Activated CD4-positive, alpha-beta memory T cell treated with anti-CD3 and anti-CD28 coated beads for 36 hours (primary cell): ENCODE measurements at regions of chr7 and their contacts with region 1.

Region 1: DNA sequence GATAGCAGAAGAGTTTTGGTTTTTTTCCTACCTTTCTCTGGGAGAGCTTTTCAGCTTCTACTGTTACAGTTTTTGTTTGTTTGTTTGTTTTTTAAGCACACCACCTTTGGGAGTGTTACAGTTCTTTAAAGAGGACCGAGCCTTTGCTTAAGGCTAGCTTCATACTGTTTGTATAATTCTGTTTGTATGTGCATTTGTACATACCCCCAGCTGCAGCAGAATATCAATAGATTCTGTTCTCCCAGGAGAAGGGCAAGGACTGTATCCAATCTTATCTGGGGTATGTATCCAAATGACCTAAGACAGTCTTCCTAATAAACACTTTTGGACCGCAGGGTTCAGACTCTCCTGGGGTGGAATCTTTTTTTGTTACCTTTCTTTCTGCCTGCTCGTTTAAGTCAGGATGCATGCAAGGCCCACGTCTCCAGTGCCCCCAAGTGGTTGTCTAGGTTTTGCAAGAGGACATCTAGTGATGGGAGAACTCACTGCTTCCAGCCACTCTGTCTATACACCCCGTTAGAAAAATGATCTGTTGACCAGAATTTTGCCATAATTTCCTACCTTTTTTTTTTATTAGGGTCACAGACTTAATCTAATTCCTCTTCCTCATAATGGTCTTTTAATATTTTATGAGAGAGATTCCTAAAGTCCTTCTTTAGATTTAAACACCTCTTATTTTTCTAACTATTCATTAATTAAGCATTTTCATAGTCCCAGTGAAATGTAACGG is 23.9 kb downstream of the NRF1 start:
- DNase-seq: peak; percentile 81
- H3K4me3 Mint-ChIP-seq: no peak overlapping the region
- H3K27ac Mint-ChIP-seq: peak overlapping the region; percentile 16
- H3K4me1 Mint-ChIP-seq: peaks cover 36% of the 10 kb centered on the region
- H3K27me3 Mint-ChIP-seq: no peaks in the 10 kb centered on the region

Region 2: GRCh38 chr7:129072479-129073011 is 562.9 kb before region 1 on chr7:
- CTCF ChIA-PET with region 1: no interaction called
- POLR2A ChIA-PET with region 1: no interaction called
- intact Hi-C with region 1: no loop called
- DNase-seq: peak; percentile 24
- H3K4me3 Mint-ChIP-seq: no peak overlapping the region
- H3K27ac Mint-ChIP-seq: no peak overlapping the region
- H3K4me1 Mint-ChIP-seq: peaks cover 6% of the 10 kb centered on the region
- H3K27me3 Mint-ChIP-seq: peaks cover 10% of the 10 kb centered on the region

Region 3: DNA sequence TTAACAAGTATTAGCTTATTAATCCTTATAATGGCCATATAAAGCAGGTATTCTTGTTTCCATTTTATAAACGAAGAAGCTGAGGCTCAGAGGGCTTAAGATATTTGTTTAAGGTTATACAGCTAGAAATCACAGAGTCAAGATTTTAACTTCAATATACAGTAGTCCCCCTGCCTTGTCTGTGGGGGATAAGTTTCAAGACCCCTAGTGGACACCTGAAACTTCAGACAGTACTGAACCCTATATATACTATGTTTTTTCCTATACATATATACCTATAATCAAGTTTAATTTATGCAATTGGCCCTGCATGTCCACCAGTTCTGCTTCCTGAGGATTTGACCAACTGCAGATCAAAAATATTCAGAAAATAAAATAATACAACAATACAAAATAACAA is 245.6 kb before region 1 on chr7:
- CTCF ChIA-PET with region 1: no interaction called
- POLR2A ChIA-PET with region 1: no interaction called
- intact Hi-C with region 1: no loop called
- DNase-seq: no peak
- H3K4me3 Mint-ChIP-seq: no peak overlapping the region
- H3K27ac Mint-ChIP-seq: no peak overlapping the region
- H3K4me1 Mint-ChIP-seq: peaks cover 8% of the 10 kb centered on the region
- H3K27me3 Mint-ChIP-seq: no peaks in the 10 kb centered on the region

Region 4: GRCh38 chr7:129401967-129402860 is 233.3 kb before region 1 on chr7:
- CTCF ChIA-PET with region 1: interaction called, 4 read pairs
- POLR2A ChIA-PET with region 1: no interaction called
- intact Hi-C with region 1: loop called (anchors 10 kb)
- DNase-seq: peak; percentile 56
- H3K4me3 Mint-ChIP-seq: no peak overlapping the region
- H3K27ac Mint-ChIP-seq: peak overlapping the region; percentile 29
- H3K4me1 Mint-ChIP-seq: peaks cover 37% of the 10 kb centered on the region
- H3K27me3 Mint-ChIP-seq: no peaks in the 10 kb centered on the region

Region 5: DNA sequence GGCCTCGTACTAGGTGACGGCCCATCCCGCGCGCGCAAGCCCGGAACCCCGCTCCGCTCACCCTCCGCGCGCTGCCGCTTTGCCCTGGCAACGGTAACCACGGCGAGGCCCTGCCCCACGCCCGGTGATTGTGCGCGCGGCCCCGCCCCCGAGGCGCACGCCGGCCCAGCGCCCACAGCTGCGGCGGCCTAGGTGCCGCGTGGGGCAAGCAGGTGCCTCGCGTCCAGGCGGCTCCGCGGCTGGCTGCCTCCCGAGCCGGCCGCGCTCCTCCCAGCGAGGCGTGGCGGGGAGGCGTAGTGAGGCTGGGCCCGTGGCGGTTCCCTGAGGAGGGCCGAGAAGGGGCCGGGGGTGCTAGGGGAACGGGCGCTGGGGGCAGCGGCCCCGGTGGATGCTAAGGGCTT is 133.1 kb before region 1 on chr7 and contains the start of gene SMKR1:
- CTCF ChIA-PET with region 1: no interaction called
- POLR2A ChIA-PET with region 1: interaction called, 3 read pairs
- intact Hi-C with region 1: loop called (anchors 5 kb)
- DNase-seq: peak; percentile 91
- H3K4me3 Mint-ChIP-seq: peak within 1 kb of the TSS; percentile 75
- H3K27ac Mint-ChIP-seq: peak within 1 kb of the TSS; percentile 56
- H3K4me1 Mint-ChIP-seq: peaks cover 9% of the 10 kb centered on the region
- H3K27me3 Mint-ChIP-seq: no peaks in the 10 kb centered on the region
- total RNA-seq, gene SMKR1: 1.5 to 2.0 TPM

Region 6: GRCh38 chr7:129599174-129599573 is 36.3 kb before region 1 on chr7:
- CTCF ChIA-PET with region 1: no interaction called
- POLR2A ChIA-PET with region 1: no interaction called
- intact Hi-C with region 1: no loop called
- DNase-seq: no peak
- H3K4me3 Mint-ChIP-seq: no peak overlapping the region
- H3K27ac Mint-ChIP-seq: no peak overlapping the region
- H3K4me1 Mint-ChIP-seq: peaks cover 7% of the 10 kb centered on the region
- H3K27me3 Mint-ChIP-seq: peaks cover 1% of the 10 kb centered on the region

Region 7: GRCh38 chr7:129707910-129708499 is 72.5 kb after region 1 on chr7:
- CTCF ChIA-PET with region 1: no interaction called
- POLR2A ChIA-PET with region 1: no interaction called
- intact Hi-C with region 1: no loop called
- DNase-seq: no peak
- H3K4me3 Mint-ChIP-seq: no peak overlapping the region
- H3K27ac Mint-ChIP-seq: no peak overlapping the region
- H3K4me1 Mint-ChIP-seq: peaks cover 13% of the 10 kb centered on the region
- H3K27me3 Mint-ChIP-seq: no peaks in the 10 kb centered on the region